Activated naive CD4-positive, alpha-beta T cell treated with anti-CD3 and anti-CD28 coated beads for 36 hours (primary cell): ENCODE measurements at regions of chr6 and their contacts with region 1.

Region 1: GRCh38 chr6:3118353-3119039 is at the start of gene BPHL:
- DNase-seq: peak; percentile 99
- H3K4me3 Mint-ChIP-seq: peak within 1 kb of the TSS; percentile 83
- H3K27ac Mint-ChIP-seq: peak within 1 kb of the TSS; percentile 78
- H3K4me1 Mint-ChIP-seq: peaks cover 21% of the 10 kb centered on the region
- H3K27me3 Mint-ChIP-seq: no peaks in the 10 kb centered on the region
- total RNA-seq, gene BPHL: 6.9 to 7.5 TPM

Region 2: DNA sequence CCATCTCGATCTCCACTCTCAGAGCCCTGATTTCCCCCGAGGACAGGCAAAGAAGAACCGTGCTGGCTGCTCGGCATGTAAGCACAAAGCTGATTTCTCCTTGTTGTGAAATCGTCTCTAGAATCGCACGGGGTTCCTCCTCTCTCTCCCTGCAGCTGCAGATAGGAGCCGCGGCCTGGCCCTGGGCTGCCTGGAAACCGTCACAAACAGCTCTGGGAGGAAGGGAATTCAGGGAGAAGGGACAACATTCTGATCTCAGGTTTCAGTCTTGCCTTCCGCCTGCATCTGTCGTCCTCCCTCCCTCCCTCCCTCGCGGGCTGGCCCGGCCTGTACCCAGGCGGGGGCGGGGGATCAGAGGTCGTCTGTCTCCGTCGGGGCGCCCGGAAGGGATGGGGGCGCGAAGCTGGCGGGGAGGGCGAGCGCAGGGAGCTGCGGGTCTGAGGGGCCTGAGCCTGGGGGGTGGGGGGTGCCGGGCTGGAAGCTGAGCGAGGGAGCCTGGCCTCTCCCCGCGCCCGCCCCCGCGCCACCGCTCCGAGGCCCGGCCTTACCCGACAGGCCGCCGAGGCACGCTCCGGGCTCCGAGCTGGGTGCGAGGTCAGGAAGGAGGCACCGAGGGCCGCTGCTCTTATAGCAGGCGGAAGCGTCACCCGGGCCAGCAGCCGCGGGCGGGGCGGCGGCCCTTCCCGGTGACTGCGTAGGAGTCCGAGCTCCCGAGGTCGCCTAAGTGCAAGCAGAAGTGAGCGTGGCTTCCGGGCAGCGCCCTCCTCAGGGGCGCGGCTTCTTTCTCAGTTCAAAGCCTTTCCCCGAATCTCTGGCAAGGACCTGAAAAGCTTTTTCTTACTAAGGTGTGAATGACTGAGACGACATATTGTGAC is 277.0 kb before region 1 on chr6 and contains the start of gene SERPINB1:
- CTCF ChIA-PET with region 1: no interaction called
- intact Hi-C with region 1: loop called (anchors 1 kb)
- DNase-seq: peak; percentile 94
- H3K4me3 Mint-ChIP-seq: peak within 1 kb of the TSS; percentile 81
- H3K27ac Mint-ChIP-seq: peak within 1 kb of the TSS; percentile 87
- H3K4me1 Mint-ChIP-seq: peaks cover 61% of the 10 kb centered on the region
- H3K27me3 Mint-ChIP-seq: no peaks in the 10 kb centered on the region
- total RNA-seq, gene SERPINB1: 200 to 208 TPM

Region 3: DNA sequence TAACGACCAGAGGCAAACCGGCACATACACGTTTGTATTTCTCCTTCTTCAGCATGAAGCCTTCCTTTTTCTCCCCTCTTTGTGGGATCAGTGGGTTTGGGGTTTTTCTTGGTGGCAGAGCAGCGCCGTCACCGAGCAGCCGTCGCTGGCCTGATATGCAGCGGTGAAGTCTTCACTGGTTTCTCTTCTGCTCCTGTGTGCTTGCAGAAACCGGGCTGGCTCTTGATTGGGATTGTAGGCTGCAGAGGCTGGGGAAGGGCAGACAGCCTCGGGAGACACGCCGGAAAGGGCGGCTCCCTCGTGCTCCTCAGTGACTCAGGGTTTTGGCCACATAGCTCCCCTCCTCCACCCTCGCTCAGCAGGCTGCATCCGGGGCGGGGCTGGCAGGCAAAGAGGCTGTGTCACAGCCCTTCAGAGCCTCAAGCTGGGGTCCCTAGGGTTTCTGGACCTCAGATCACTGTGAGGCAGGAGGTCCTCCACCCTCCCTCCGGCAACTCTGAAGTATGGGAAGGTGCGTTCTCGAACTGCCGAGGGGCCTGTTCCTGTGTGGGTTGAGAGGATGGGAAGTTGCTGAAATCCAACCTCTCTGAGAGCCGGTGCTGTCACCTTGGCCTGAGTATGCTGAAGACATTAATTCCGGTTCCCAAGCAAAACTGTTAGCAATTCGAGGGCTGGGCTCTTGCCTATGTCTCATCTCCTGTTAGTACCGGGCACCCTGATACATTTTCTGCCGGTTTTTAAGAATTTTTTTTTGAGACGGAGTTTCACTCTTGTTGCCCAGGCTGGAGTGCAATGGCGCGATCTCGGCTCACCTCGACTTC is 94.6 kb before region 1 on chr6:
- CTCF ChIA-PET with region 1: no interaction called
- intact Hi-C with region 1: loop called (anchors 1 kb)
- DNase-seq: peak; percentile 93
- H3K4me3 Mint-ChIP-seq: peak overlapping the region; percentile 84
- H3K27ac Mint-ChIP-seq: peak overlapping the region; percentile 80
- H3K4me1 Mint-ChIP-seq: peaks cover 57% of the 10 kb centered on the region
- H3K27me3 Mint-ChIP-seq: no peaks in the 10 kb centered on the region

Region 4: DNA sequence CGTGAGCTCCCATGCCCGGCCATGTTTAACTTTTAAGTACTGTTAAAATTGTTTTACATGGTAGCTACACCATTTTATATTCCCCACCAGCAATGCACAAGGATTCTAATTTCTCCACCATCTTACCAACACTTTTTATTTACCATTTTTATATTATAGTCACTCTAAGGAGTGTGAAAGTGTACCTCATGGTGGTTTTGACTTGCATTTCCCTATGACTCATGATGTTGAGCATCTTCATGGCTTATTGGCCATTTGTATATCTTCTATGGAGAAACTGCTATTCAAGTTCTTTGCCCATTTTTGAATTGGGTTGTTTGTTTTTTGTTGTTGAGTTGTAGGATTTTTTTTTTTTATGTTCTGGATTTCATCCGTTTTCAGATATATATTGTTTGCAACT is 15.6 kb before region 1 on chr6:
- CTCF ChIA-PET with region 1: no interaction called
- intact Hi-C with region 1: no loop called
- DNase-seq: no peak
- H3K4me3 Mint-ChIP-seq: no peak overlapping the region
- H3K27ac Mint-ChIP-seq: no peak overlapping the region
- H3K4me1 Mint-ChIP-seq: peaks cover 4% of the 10 kb centered on the region
- H3K27me3 Mint-ChIP-seq: no peaks in the 10 kb centered on the region

Region 5: GRCh38 chr6:3258720-3259490 is 140.4 kb after region 1 on chr6 and contains the start of gene PSMG4:
- CTCF ChIA-PET with region 1: interaction called, 3 read pairs
- intact Hi-C with region 1: loop called (anchors 1 kb)
- DNase-seq: peak; percentile 94
- H3K4me3 Mint-ChIP-seq: peak within 1 kb of the TSS; percentile 94
- H3K27ac Mint-ChIP-seq: peak within 1 kb of the TSS; percentile 87
- H3K4me1 Mint-ChIP-seq: peaks cover 35% of the 10 kb centered on the region
- H3K27me3 Mint-ChIP-seq: no peaks in the 10 kb centered on the region
- total RNA-seq, gene PSMG4: 23.9 to 26.2 TPM

Region 6: DNA sequence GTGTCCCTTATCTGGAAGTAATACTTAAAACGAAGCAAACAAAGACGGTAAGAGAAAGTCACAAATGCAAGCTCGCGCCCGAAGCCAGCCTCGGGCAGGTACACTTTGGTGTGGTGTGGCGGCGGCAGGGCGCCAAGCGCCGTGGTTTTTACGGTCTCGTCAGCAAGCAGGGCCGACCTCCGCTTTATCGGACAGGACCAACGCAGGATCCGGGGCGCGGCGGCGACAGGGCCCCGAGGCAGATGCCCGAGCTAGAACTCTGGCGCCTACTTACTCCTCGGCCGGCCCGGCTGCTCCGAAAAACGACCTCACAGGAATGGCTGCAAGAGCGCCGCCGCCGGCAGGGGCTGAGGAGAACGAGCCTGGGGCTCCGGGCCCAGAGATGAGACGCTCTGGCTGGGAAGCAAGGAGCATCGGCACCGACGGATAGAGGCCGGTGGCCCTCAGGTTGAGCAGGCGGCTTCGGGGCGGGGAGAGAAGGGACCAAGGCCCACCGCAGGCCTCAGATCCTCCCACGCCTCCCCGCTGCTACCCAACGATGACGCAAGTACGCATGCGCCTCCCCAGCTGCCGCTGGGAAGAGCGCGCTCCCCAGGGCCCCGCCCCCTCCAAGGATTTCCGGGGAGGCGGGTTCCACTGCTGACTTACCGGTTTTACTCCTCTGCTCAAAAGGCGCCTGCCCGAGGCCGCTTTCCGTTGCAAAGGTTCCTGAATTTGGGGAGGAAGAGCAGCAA is 899.8 kb after region 1 on chr6:
- CTCF ChIA-PET with region 1: no interaction called
- intact Hi-C with region 1: loop called (anchors 2 kb)
- DNase-seq: peak; percentile 97
- H3K4me3 Mint-ChIP-seq: peak overlapping the region; percentile 82
- H3K27ac Mint-ChIP-seq: peak overlapping the region; percentile 92
- H3K4me1 Mint-ChIP-seq: peaks cover 57% of the 10 kb centered on the region
- H3K27me3 Mint-ChIP-seq: no peaks in the 10 kb centered on the region

Region 7: GRCh38 chr6:5003604-5004372 is 1885.3 kb after region 1 on chr6 and contains the start of gene RPP40:
- CTCF ChIA-PET with region 1: no interaction called
- intact Hi-C with region 1: loop called (anchors 2 kb)
- DNase-seq: peak; percentile 98
- H3K4me3 Mint-ChIP-seq: peak within 1 kb of the TSS; percentile 90
- H3K27ac Mint-ChIP-seq: peak within 1 kb of the TSS; percentile 91
- H3K4me1 Mint-ChIP-seq: peaks cover 11% of the 10 kb centered on the region
- H3K27me3 Mint-ChIP-seq: no peaks in the 10 kb centered on the region
- total RNA-seq, gene RPP40: 8.2 to 9.8 TPM